Panc1 (cell line): ENCODE measurements at regions of chr4 and their contacts with region 1.

Region 1: GRCh38 chr4:85795935-85796334 is 321.0 kb downstream of the ARHGAP24 start:
- DNase-seq: no peak
- ATAC-seq: no peak
- H3K4me3 ChIP-seq: no peak overlapping the region
- H3K27ac ChIP-seq: no peak overlapping the region
- H3K4me1 ChIP-seq: no peaks in the 10 kb centered on the region
- H3K27me3 ChIP-seq: no peaks in the 10 kb centered on the region
- CTCF ChIP-seq: no peak

Region 2: GRCh38 chr4:85854546-85854945 is 58.6 kb after region 1 on chr4:
- CTCF ChIA-PET with region 1: no interaction called
- POLR2A ChIA-PET with region 1: no interaction called
- in situ Hi-C with region 1: no loop called
- intact Hi-C with region 1: no loop called
- DNase-seq: no peak
- ATAC-seq: no peak
- H3K4me3 ChIP-seq: no peak overlapping the region
- H3K27ac ChIP-seq: no peak overlapping the region
- H3K4me1 ChIP-seq: no peaks in the 10 kb centered on the region; the same call in 1 of the 2 replicates
- H3K27me3 ChIP-seq: no peaks in the 10 kb centered on the region
- CTCF ChIP-seq: no peak

Region 3: GRCh38 chr4:86043755-86044592 is 248.0 kb after region 1 on chr4:
- CTCF ChIA-PET with region 1: no interaction called
- POLR2A ChIA-PET with region 1: no interaction called
- in situ Hi-C with region 1: no loop called
- intact Hi-C with region 1: loop called (anchors 2 kb)
- DNase-seq: no peak
- ATAC-seq: peak; percentile 63; the same call in 1 of the 2 replicates
- H3K4me3 ChIP-seq: no peak overlapping the region
- H3K27ac ChIP-seq: no peak overlapping the region
- H3K4me1 ChIP-seq: no peaks in the 10 kb centered on the region
- H3K27me3 ChIP-seq: no peaks in the 10 kb centered on the region; the same call in 1 of the 2 replicates
- CTCF ChIP-seq: peak; percentile 66